Posterior cingulate gyrus (tissue), 11 donors: ENCODE measurements at regions of chr18 and their contacts with region 1.

Region 1: DNA sequence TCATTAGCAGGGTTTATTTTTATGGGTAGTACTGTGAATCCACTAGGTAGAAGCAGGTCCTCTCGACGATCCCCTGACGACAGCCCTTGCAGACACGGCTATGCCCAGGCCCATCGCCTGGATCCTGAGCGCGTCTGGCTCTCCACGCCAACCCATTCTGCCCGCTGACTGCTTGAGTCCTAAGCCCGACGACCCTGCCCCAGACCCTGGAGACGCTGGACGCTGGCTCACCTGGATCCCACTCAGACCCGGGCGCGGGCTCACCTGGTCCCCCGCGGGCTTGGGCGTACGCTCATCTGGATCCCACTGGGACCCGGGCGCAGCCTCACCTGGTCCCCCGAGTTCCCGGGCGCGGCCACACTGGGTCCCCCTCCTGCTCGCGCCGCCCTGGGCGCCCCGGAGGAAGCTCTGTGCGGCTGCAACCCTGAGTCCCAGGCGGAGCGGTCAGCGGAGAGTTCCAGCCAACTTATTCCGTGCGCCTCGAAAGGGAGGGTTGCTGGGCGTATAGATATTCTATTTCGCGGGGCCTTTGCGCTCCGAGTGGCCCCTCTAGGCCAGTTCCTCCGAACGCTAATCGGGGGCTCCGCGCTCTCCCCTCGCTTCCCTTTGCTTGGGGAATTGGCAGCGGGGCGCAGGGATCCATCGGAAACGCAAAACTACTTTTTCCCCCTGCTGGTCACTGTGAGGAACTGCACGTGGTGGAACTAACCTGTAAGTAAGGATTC is 22.4 kb upstream of the RMP24 start:
- DNase-seq: peak in 9 of 10 donors; percentile 22 to 92 (median 64)

Region 2: GRCh38 chr18:35386600-35387351 is 563.3 kb before region 1 on chr18:
- intact Hi-C with region 1: loop called (anchors 5 kb)
- DNase-seq: peak in 6 of 10 donors; percentile 44 to 92 (median 52)

Region 3: DNA sequence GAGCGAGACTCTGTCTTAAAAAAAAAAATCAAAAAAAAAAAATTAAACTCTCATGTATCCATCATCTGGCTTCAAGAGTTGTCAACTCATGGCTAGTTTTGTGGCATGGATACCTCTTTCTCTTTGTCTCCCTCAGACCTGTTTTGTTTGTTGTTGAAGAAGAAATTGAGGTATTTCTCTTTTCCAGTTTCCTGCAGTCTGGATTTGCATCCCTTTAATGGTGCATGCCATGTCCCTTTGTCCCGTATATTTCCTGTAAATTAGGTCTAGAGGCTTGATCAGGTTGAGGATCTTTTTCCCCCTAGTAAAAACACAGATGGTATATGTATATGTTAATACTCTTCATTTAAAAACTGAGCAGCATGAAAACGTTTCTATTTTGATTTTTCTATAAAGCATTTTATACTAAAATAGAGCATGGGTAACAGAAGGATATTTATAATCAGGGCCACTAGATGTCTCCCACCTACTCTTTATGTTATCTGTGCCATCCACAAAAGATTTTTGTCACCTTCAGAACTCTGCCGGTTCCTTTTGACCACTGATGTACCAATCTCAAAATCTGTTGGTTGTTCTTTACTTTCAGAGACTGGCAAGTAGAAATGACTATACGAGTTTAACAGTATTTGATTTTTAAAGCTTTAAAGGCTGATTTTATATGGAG is 288.4 kb before region 1 on chr18:
- intact Hi-C with region 1: loop called (anchors 1 kb)
- DNase-seq: no peak

Region 4: DNA sequence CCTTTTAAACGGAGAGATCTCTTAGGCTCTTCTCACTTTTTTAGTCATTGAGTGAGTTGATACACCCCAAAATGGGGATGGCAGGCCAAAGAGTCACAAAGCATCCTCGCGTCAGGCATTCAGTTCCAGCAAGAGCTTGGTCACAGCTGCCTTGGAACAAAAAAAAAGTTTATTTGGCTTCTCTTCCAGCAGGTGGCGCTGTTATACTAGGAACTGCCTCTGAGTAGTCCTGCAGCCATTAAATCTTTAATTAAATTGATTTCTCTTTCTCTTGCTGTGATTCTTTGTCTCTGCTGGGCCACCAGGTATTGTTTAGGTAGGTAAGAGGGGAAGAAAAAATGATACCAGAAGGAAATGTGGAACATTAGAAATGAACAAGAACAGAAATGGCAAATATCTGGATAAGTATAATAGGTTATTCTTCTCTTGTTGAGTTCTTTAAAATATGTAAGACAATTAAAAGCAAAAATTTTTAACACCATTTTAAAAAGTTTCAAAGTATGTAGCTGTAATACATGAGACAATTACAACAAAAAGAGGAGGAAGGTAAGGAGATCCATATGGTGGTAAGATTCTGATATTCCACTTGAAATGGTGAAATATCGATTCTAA is 193.5 kb before region 1 on chr18:
- intact Hi-C with region 1: loop called (anchors 1 kb)
- DNase-seq: peak in 6 of 10 donors; percentile 17 to 87 (median 57)

Region 5: DNA sequence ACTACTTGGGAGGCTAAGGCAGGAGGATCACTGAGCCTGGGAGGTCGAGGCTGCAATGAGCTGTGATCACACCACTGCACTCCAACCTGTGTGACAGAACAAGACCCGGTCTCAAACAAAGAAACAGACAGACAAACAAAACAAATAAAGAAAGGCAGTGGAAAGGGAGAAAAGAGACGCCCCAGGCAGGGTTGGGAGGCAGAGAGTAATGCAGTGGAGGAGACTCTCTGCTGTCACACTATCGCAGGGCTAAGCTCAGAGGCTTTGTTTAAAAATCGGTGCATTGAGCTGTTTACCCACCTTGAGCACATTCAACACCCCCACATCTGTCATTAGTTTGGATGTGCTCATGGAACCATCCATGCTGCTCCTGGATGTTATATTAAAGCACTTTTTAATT is 61.7 kb before region 1 on chr18:
- intact Hi-C with region 1: no loop called
- DNase-seq: no peak